ENCODE measurements at regions of chr1 and their contacts with region 1.

Region 1: DNA sequence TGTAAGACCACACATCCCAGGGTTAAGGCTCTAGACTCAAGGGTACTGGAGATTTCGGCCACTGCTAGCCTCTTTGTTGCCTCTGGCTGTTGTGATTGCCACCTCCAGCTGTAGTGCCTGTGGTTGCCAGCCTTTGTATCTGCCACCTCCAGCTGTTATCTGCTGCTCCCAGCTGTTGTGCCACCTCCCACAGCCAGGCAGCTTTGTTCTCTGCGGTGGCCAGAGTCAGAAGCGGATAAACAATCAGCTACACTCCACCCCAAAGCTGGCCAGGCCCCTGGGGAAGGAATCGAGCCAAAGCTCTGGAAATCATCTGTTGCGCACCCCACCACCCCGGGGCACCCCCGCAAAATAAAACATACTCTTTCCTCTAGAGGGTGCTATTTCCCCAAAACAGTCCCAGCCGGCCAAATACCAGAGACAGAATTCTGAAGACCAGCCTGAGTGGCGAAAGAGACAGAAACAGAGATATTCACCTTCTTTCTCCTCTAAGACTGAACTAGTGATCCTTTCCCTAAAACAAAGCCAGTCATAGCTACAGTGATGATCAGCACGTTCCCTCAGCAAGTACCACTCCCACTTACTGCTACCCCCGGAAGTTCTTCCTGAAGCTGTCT is 14.8 kb upstream of the PIGM start:
- DNase-seq: no peak
- ATAC-seq: peak; percentile 79
- H3K4me3 Mint-ChIP-seq: peak overlapping the region; percentile 72
- H3K27ac Mint-ChIP-seq: peak overlapping the region; percentile 6
- H3K4me1 Mint-ChIP-seq: peaks cover 12% of the 10 kb centered on the region
- H3K27me3 Mint-ChIP-seq: peaks cover 26% of the 10 kb centered on the region
- CTCF ChIP-seq: no peak

Region 2: GRCh38 chr1:160018900-160019299 is 27.7 kb before region 1 on chr1:
- CTCF ChIA-PET with region 1: no interaction called
- POLR2A ChIA-PET with region 1: no interaction called
- intact Hi-C with region 1: no loop called
- DNase-seq: no peak
- ATAC-seq: no peak
- H3K4me3 Mint-ChIP-seq: no peak overlapping the region
- H3K27ac Mint-ChIP-seq: no peak overlapping the region
- H3K4me1 Mint-ChIP-seq: no peaks in the 10 kb centered on the region
- H3K27me3 Mint-ChIP-seq: peaks cover 8% of the 10 kb centered on the region
- CTCF ChIP-seq: no peak

Region 3: DNA sequence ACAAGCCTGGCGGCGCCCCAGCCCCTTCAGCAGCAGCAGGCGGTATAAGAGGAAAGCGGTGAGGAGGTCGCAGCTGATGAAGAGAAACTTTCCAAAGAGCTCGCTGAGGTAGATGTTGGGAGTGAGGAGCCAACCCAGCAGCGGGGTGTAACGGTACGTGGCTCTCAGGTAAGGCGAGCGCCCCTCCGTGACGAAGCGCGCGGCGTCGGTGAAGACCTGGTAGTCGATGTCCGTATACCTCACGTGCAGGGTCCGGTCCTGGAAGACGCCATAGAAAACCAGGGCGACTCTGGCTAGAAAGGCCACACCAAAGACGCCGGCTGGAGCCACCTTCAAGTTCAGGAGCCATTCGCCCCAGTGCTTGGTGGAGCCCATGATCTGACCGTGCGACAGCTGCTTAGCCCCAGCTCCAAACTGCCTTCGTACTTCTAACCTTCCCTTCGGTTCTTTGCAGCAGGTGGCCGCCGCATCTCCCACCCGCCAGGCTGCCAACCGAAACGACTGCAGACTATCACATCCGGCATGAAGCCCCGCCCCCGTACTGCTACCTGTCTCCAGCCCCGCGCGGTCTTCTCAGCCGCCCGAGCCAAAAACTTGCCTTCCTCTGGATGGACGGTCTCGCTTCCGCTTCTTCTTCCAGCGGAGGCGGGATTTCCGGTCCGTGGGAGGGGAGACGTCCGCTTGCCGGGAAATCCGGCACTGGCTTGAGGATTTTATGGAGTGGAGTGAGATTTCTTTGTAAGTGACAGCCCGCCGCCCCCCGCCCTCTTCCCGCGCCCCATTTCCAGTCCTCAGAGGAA is 15.0 kb before region 1 on chr1 and contains the start of gene PIGM:
- CTCF ChIA-PET with region 1: interaction called, 13 read pairs
- POLR2A ChIA-PET with region 1: interaction called, 3 read pairs
- intact Hi-C with region 1: no loop called
- DNase-seq: peak; percentile 81
- ATAC-seq: peak; percentile 98
- H3K4me3 Mint-ChIP-seq: peak within 1 kb of the TSS; percentile 97
- H3K27ac Mint-ChIP-seq: peak within 1 kb of the TSS; percentile 82
- H3K4me1 Mint-ChIP-seq: peaks cover 26% of the 10 kb centered on the region
- H3K27me3 Mint-ChIP-seq: no peaks in the 10 kb centered on the region
- CTCF ChIP-seq: no peak
- total RNA-seq, gene PIGM: 4.5 and 5.3 TPM in 2 replicates

Region 4: DNA sequence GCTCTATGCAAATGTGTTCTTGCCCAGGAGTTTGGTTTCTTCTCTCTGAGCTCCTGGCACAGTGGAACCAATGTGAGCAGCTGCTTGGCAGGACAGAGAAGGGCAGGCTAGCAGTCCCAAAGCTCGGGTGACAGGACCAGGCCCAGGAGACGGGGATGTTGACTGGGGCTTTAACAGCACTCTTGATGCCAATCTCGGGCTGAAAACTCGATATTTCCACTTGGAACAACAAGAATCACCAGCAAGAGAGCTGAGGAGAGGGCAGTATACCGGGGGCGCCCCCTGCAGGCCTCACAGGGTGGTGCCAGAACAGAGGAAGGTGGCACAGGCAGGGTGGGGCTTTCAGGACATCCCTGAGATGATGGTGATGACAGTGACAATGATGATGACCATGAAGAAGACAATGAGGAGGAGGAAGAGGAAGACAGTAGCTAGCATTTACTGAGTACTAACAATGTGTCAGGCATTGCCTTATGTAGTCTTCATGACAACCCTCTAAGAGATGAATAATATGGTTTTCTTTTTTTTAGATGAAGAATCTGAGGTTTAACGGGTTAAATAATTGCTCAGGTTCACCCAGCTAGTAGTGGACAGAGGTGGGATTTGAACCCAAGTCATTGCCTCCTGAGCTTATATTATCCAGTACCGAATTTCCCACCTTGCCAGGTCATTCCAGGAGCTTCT is 32.1 kb after region 1 on chr1:
- CTCF ChIA-PET with region 1: interaction called, 81 read pairs
- POLR2A ChIA-PET with region 1: interaction called, 3 read pairs
- intact Hi-C with region 1: no loop called
- DNase-seq: peak; percentile 33
- ATAC-seq: peak; percentile 81
- H3K4me3 Mint-ChIP-seq: no peak overlapping the region
- H3K27ac Mint-ChIP-seq: no peak overlapping the region
- H3K4me1 Mint-ChIP-seq: peaks cover 4% of the 10 kb centered on the region
- H3K27me3 Mint-ChIP-seq: peaks cover 53% of the 10 kb centered on the region
- CTCF ChIP-seq: no peak

Region 5: DNA sequence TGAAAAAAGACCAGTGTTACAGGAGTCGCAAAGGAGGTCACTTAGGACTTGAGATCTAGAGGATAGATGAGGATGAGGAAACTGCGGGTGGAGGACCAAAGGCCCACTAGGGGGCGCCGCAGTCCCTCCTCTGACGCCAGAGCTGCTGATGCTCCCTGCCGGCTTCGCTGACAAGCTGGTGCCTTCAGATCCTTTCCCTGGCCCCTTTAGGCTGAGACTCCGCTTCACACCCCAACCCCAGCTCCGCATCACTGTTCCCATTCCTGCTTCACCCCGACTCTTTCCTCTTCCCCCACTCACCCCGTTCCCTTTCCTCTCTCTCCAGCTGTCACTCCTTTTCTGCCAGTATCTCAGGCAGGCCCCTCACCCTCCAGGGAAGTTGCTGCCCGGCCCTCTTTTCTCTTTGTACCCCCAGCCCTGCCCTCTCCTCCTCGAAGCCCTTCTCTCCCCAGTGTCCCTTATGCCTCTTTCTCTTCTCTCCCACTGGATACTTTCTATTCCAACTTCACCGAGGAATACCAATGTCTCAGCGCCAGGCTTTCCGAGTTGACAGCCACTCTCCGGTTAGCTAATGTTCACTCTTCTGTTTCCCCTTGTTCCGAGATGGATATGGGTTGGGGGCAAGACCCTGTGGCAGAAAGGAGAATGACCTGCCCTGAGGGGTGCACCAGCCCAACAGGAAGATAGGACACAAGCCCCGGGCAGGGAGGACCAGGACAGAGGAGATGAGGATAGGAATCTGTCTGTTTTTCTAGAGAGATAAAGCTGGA is 39.3 kb after region 1 on chr1:
- CTCF ChIA-PET with region 1: interaction called, 81 read pairs
- POLR2A ChIA-PET with region 1: interaction called, 3 read pairs
- intact Hi-C with region 1: loop called (anchors 1 kb)
- DNase-seq: peak; percentile 60
- ATAC-seq: peak; percentile 68
- H3K4me3 Mint-ChIP-seq: no peak overlapping the region
- H3K27ac Mint-ChIP-seq: no peak overlapping the region
- H3K4me1 Mint-ChIP-seq: peaks cover 14% of the 10 kb centered on the region
- H3K27me3 Mint-ChIP-seq: peaks cover 16% of the 10 kb centered on the region
- CTCF ChIP-seq: no peak

Region 6: GRCh38 chr1:160169553-160170399 is 123.2 kb after region 1 on chr1:
- CTCF ChIA-PET with region 1: no interaction called
- POLR2A ChIA-PET with region 1: no interaction called
- intact Hi-C with region 1: no loop called
- DNase-seq: no peak
- ATAC-seq: peak; percentile 61
- H3K4me3 Mint-ChIP-seq: peak overlapping the region; percentile 48
- H3K27ac Mint-ChIP-seq: peak overlapping the region; percentile 47
- H3K4me1 Mint-ChIP-seq: peaks cover 13% of the 10 kb centered on the region
- H3K27me3 Mint-ChIP-seq: peaks cover 4% of the 10 kb centered on the region
- CTCF ChIP-seq: no peak